Endothelial cell of umbilical vein (primary cell): ENCODE measurements at regions of chr2 and their contacts with region 1.

Region 1: GRCh38 chr2:236833501-236834073 is 252.1 kb upstream of the COPS8 start:
- DNase-seq: peak; percentile 95
- H3K4me3 ChIP-seq: no peak overlapping the region
- H3K27ac ChIP-seq: peak overlapping the region; percentile 94
- H3K4me1 ChIP-seq: peaks cover 23% of the 10 kb centered on the region
- H3K27me3 ChIP-seq: no peaks in the 10 kb centered on the region
- CTCF ChIP-seq: no peak
- POLR2A ChIP-seq: no peak

Region 2: DNA sequence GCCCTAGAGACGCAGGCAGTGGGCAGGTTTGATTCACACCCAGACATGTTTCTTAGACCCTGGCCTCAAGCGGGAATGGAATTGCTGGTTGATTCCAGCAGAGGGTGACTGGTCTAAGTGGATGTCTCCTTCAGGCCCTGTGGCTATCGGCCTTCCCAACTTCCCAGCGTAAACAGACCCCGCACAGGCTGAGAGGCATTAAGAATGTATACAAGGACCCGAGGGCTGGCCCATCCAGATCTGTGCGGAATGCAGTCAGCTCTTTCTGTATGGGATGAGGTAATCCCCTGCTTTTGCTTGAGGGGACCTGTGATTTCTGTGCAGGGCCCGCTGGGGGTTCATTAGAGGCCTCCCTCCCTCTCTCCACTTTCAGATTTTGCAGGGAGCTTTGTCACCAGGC is 257.5 kb before region 1 on chr2:
- CTCF ChIA-PET with region 1: no interaction called
- POLR2A ChIA-PET with region 1: no interaction called
- dilution Hi-C with region 1: no loop called
- intact Hi-C with region 1: loop called (anchors 2 kb)
- DNase-seq: peak; percentile 77
- H3K4me3 ChIP-seq: no peak overlapping the region
- H3K27ac ChIP-seq: peak overlapping the region; percentile 9
- H3K4me1 ChIP-seq: peaks cover 59% of the 10 kb centered on the region
- H3K27me3 ChIP-seq: no peaks in the 10 kb centered on the region
- CTCF ChIP-seq: peak; percentile 11 to 48
- POLR2A ChIP-seq: no peak

Region 3: DNA sequence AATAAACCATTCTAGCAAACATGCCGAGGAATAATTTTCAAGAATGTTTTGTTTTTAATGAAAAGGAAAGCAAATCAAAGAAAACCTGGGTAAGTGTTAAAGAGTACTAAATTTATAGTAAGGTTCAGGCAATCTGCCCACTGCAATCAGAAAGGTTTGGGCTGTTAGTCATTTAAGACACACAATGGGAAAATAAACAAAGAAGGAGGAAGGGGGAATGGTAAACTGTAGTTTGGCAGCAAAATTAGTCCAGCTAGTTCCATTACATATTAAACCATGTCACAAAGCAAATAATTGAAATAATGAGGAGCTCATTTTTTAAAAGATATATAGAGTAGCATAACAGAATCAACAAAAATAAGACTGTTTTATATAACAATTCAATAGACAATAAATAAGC is 164.6 kb after region 1 on chr2:
- CTCF ChIA-PET with region 1: no interaction called
- POLR2A ChIA-PET with region 1: no interaction called
- dilution Hi-C with region 1: no loop called
- intact Hi-C with region 1: loop called (anchors 2 kb)
- DNase-seq: peak; percentile 88
- H3K4me3 ChIP-seq: peak overlapping the region in 1 of 3 experiments; percentile 5
- H3K27ac ChIP-seq: peak overlapping the region; percentile 88
- H3K4me1 ChIP-seq: peaks cover 33% of the 10 kb centered on the region
- H3K27me3 ChIP-seq: no peaks in the 10 kb centered on the region
- CTCF ChIP-seq: no peak
- POLR2A ChIP-seq: no peak